ENCODE measurements at regions of chr14 and their contacts with region 1.

Region 1: DNA sequence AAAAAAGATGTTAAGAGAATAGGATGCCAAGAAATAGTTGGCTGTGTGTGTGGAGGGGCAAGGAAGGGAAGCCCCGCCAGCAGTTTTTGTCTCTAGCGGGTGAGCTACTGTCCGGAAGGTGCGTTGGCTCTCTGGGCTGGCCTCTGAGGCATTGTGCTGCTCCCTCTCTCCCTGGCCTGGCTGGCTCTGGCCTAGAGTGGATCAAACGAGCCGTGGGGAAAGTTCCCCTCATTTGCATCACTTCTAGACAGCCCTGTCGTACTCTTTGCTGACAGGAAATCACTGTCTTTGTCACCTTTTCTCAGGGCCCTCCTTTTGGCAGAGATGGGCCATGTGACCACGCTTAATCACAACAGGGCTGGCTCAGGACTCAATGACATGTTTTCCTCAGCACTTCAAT is 236.1 kb upstream of the NPAS3 start:
- DNase-seq: peak; percentile 76
- H3K4me3 ChIP-seq: no peak overlapping the region
- H3K27ac ChIP-seq: peak overlapping the region; percentile 72 to 83 (median 81)
- H3K4me1 ChIP-seq: peaks cover 0 to 41% (median 24%) of the 10 kb centered on the region in 4 donors
- H3K27me3 ChIP-seq: no peaks in the 10 kb centered on the region
- CTCF ChIP-seq: no peak
- EP300 ChIP-seq: no peak
- POLR2A ChIP-seq: no peak

Region 2: DNA sequence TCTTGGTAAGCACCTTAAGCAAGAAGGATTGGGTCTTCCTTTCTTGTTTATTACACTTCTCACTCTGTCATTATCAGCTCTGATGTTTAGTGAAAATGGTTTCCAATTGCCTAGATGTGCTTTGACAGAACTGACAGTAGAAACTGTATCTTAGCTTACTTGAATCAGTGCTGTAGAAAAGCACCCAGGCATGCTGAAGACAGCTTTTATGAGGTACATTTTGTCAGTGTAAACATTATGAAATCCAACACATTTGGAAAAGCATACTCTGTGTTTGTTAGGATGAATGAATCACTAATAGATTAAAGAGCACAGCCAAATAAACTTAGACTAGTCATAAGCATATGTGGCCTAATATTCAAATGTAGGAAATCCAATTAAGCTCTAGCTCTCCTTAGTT is 54.1 kb before region 1 on chr14:
- intact Hi-C with region 1: loop called (anchors 5 kb)
- DNase-seq: no peak
- H3K4me3 ChIP-seq: no peak overlapping the region
- H3K27ac ChIP-seq: peak overlapping the region in 1 of 4 donors; percentile 30
- H3K4me1 ChIP-seq: peaks cover 0 to 22% (median 14%) of the 10 kb centered on the region in 4 donors
- H3K27me3 ChIP-seq: no peaks in the 10 kb centered on the region
- CTCF ChIP-seq: no peak
- EP300 ChIP-seq: no peak
- POLR2A ChIP-seq: no peak

Region 3: DNA sequence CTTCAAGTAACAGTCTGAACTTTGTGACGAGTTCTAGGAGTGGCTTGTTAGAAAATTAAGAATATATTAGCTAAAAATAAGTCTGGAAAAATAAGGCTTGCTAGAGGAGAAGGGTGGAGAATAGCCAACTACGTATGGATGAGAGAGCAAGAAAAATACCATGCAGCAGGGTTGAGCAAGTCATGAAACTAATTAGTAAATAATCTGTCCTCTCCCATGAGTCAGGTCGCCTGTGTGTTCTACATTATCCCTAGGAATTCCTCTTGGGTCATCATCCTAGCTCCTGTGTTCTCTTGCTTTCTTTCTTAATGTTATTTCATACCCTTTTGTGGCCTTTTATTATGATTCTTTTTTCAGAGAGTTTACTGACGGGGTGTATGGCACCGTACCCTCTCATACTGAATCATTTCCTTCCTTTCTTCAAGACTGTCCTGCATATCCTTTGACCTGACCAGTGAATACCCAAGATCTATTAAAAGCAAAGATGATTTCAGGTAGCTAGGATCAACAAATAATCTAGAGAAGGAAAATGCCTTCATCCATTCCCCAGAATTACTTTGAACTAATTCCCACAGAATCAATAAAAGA is 58.9 kb after region 1 on chr14:
- intact Hi-C with region 1: no loop called
- DNase-seq: no peak
- H3K4me3 ChIP-seq: no peak overlapping the region
- H3K27ac ChIP-seq: no peak overlapping the region
- H3K4me1 ChIP-seq: no peaks in the 10 kb centered on the region
- H3K27me3 ChIP-seq: no peaks in the 10 kb centered on the region
- CTCF ChIP-seq: no peak
- EP300 ChIP-seq: no peak
- POLR2A ChIP-seq: no peak

Region 4: DNA sequence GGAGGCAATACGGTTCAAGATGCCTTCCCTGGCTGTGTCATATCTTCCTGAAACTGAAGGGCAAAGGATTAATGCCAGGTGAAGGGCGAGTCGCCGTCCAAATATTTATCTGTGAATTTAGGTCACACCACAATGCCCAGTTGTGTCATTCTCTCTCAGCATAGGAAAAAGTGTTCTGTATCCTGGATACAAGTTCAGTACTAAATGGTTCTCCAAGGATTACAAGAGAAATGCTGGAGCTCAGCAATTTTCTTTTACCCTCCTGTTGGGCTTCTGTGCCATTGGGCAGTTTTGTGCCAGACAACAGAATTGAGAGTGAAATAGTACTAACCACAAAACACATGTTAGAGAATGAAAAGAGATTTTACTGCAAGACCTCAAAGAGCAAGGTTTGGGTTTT is 754.5 kb after region 1 on chr14:
- intact Hi-C with region 1: loop called (anchors 10 kb)
- DNase-seq: no peak
- H3K4me3 ChIP-seq: no peak overlapping the region
- H3K27ac ChIP-seq: no peak overlapping the region
- H3K4me1 ChIP-seq: peaks cover 0 to 74% (median 48%) of the 10 kb centered on the region in 4 donors
- H3K27me3 ChIP-seq: no peaks in the 10 kb centered on the region
- CTCF ChIP-seq: no peak
- EP300 ChIP-seq: no peak
- POLR2A ChIP-seq: no peak